Caco-2 (cell line): ENCODE measurements at regions of chr7 and their contacts with region 1.

Region 1: GRCh38 chr7:86926732-86927131 is 132.7 kb downstream of the ELAPOR2 start:
- DNase-seq: peak in 1 of 2 experiments; percentile 43
- H3K4me3 ChIP-seq: no peak overlapping the region
- H3K4me3 Mint-ChIP-seq: no peak overlapping the region
- H3K27ac Mint-ChIP-seq: no peak overlapping the region
- H3K4me1 ChIP-seq: no peaks in the 10 kb centered on the region
- H3K4me1 Mint-ChIP-seq: no peaks in the 10 kb centered on the region
- H3K27me3 ChIP-seq: no peaks in the 10 kb centered on the region
- H3K27me3 Mint-ChIP-seq: peaks cover 16% of the 10 kb centered on the region
- CTCF ChIP-seq: peak; percentile 66 to 73

Region 2: GRCh38 chr7:86914551-86914950 is 12.2 kb before region 1 on chr7:
- CTCF ChIA-PET with region 1: interaction called, 10 read pairs
- POLR2A ChIA-PET with region 1: no interaction called
- intact Hi-C with region 1: no loop called
- DNase-seq: peak in 1 of 2 experiments; percentile 8
- H3K4me3 ChIP-seq: no peak overlapping the region
- H3K4me3 Mint-ChIP-seq: no peak overlapping the region
- H3K27ac Mint-ChIP-seq: no peak overlapping the region
- H3K4me1 ChIP-seq: no peaks in the 10 kb centered on the region
- H3K4me1 Mint-ChIP-seq: no peaks in the 10 kb centered on the region
- H3K27me3 ChIP-seq: no peaks in the 10 kb centered on the region
- H3K27me3 Mint-ChIP-seq: peaks cover 4% of the 10 kb centered on the region
- CTCF ChIP-seq: peak; percentile 31 to 49

Region 3: DNA sequence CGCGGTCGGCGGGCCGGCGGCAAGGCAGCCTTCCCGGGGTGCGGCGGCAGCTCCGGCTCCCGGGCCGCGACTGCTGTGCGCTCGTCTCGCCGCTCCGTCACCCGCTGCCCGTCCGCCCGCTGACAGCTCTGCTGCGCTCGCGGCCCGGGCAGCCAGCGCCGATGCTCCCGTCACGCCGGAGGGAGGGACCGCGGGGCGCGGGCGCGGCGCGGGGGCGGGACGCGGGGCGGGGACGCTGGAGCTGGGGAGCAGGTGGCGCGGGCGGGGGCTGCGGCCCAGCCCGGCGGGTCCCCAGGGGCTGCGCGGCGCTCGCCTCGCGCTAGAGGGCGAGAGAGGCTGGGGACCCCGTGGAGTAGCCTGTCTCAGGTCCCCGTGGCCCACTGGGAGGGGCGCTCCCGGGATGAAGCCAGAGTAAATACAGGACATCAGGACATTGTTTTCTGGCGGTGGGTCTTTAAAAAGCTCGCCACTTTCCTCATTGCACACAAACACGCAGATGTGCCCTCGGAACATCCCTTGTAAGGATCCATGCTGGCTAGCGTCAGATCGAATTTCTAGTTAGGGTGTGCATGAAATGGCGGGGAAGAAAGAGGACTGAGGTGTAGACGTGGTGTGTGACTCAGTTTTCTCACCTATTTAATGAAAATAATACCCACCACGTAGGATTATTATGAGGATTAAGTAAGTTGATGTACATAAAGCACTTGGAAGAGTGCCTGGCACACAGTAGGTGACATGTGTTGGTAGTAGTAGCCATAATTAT is 133.0 kb after region 1 on chr7 and contains the start of gene ELAPOR2:
- CTCF ChIA-PET with region 1: no interaction called
- POLR2A ChIA-PET with region 1: no interaction called
- intact Hi-C with region 1: loop called (anchors 2 kb)
- DNase-seq: peak; percentile 68 to 85
- H3K4me3 ChIP-seq: peak within 1 kb of the TSS; percentile 44
- H3K4me3 Mint-ChIP-seq: peak within 1 kb of the TSS; percentile 68
- H3K27ac Mint-ChIP-seq: no peak within 1 kb of the TSS
- H3K4me1 ChIP-seq: peaks cover 4% of the 10 kb centered on the region
- H3K4me1 Mint-ChIP-seq: no peaks in the 10 kb centered on the region
- H3K27me3 ChIP-seq: no peaks in the 10 kb centered on the region; the same call in 1 of the 2 replicates
- H3K27me3 Mint-ChIP-seq: peaks cover 13% of the 10 kb centered on the region
- CTCF ChIP-seq: peak; percentile 46 to 59
- total RNA-seq, gene ELAPOR2: 4.6 and 5.6 TPM in 2 replicates